RWPE1 (cell line): ENCODE measurements at regions of chr12 and their contacts with region 1.

Region 1: DNA sequence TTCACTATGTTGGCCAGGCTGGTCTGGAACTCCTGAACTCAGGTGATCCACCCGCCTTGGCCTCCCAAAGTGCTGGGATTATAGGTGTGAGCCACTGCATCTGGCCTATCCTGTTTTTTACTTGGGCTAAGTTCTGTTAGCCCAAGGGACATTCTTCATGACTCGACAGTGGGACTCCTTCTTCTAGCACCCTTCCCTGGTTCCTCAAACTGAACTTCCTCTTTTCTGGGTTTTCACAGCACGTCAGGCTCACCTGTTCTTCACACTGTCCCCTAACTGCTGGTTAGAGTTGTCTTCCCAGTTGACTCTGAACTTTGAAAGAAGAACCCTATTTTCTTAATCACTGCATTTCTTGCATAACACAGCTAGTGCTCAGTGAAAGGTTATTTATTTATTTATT is 22.5 kb downstream of the CABP1 start:
- DNase-seq: no peak
- H3K27ac ChIP-seq: no peak overlapping the region
- CTCF ChIP-seq: no peak

Region 2: DNA sequence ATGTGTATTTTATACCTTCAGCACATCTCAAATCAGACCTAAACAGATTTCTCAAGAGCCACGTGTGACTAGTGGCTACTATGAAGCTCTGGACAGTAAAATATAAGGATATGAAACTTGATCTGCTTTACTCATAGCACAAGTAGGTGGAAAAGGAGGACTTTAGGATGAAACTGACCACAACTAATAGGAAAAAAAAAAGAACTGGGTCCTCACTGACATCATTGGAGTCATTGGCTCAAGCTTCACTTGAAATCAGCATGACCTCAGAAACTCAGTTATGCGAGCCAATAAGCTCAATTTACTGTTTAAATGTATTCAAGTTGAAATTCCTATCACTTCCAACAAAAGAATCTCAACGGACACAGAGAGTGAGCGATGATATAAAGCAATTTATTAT is 751.7 kb before region 1 on chr12:
- CTCF ChIA-PET with region 1: no interaction called
- POLR2A ChIA-PET with region 1: no interaction called
- DNase-seq: no peak
- H3K27ac ChIP-seq: no peak overlapping the region
- CTCF ChIP-seq: no peak

Region 3: DNA sequence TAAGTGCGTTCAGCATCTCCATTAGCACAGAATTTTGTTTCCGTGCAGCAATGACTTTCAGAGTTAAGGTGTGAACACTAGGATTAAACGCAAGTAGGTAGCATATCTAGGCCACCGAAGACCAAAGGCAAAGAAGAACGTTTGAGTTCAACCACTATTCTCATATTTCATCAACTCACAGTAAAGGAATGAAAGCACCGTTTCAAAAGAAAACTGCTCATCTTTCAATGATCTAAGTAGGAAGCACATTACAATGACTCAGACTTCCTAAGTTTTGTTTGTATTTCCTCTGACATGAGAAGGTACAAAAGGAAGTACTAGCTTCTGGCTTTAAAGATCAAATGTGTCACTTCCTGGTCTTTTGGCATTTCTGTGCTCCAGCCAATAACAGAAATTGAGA is 120.3 kb after region 1 on chr12:
- CTCF ChIA-PET with region 1: no interaction called
- POLR2A ChIA-PET with region 1: interaction called, 10 read pairs
- DNase-seq: peak; percentile 54
- H3K27ac ChIP-seq: no peak overlapping the region
- CTCF ChIP-seq: no peak